ENCODE measurements at regions of chr14 and their contacts with region 1.

Region 1: GRCh38 chr14:23483236-23483854 is 13.8 kb downstream of the NGDN start:
- DNase-seq: peak; percentile 87
- ATAC-seq: peak; percentile 87
- H3K4me3 Mint-ChIP-seq: peak overlapping the region; percentile 55
- H3K27ac Mint-ChIP-seq: peak overlapping the region; percentile 97
- H3K4me1 Mint-ChIP-seq: peaks cover 65% of the 10 kb centered on the region
- H3K27me3 Mint-ChIP-seq: no peaks in the 10 kb centered on the region; the same call in 1 of the 2 replicates
- CTCF ChIP-seq: peak; percentile 72

Region 2: DNA sequence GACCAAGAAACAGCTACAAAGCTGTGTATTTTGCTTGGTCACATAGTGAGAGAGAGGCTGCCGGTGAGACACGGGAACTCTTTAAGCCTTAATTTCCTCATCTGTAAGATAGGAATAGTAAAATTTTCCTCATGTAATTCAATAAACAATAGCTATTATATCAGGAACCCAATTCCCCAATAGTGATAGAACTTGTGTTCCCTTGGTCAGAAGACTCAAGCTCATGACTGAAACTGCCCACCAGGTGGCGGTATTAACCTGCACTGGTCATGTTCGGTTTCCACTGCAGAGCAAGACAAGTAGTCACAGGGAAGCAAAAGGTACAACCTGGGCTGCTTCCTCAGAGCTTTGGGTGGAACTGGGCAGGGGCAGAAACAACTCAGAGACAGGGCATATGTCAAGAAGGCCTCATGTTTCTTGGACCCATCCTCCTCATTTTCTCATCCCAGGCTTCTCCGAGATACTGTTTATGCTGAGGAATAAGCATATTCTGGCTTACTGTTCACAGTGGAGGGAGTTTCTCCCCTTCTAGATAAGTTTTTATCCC is 496.8 kb before region 1 on chr14:
- CTCF ChIA-PET with region 1: no interaction called
- POLR2A ChIA-PET with region 1: no interaction called
- DNase-seq: peak; percentile 95
- ATAC-seq: peak; percentile 57
- H3K4me3 Mint-ChIP-seq: no peak overlapping the region
- H3K27ac Mint-ChIP-seq: no peak overlapping the region
- H3K4me1 Mint-ChIP-seq: peaks cover 5% of the 10 kb centered on the region
- H3K27me3 Mint-ChIP-seq: no peaks in the 10 kb centered on the region; the same call in 1 of the 2 replicates
- CTCF ChIP-seq: peak; percentile 83

Region 3: DNA sequence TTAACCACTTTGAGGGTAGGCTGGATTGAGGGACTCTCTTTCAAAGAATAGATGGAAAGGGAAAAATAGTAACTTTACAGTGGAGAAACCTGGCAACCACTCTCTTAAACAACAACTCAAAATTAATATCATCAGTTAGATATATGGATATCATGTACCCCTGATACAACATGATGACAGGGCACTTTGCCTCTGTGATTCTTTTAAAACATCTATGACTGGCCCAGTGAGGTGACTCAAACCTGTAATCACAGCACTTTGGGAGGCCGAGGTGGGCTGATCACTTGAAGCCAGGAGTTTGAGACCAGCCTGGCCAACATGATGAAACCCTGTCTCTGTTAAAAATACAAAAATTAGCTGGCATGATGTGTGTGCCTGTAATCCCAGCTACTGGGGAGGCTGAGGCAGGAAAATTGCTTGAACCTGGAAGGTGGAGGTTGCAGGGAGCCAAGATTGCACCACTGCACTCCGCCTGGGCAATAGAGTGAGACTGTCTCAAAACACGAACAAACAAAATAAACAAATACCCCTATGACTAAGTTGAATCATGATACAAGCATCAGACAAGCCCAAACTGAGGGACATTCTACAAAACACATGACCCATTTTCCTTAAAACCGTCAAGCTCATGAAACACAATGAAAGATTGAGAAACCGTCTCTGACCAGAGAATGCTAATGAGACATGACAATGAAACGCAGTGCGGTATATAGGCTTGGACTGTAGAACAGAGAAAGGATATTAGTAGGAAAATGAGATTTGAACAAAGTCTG is 273.5 kb before region 1 on chr14:
- CTCF ChIA-PET with region 1: no interaction called
- POLR2A ChIA-PET with region 1: no interaction called
- DNase-seq: no peak
- ATAC-seq: no peak
- H3K4me3 Mint-ChIP-seq: no peak overlapping the region
- H3K27ac Mint-ChIP-seq: no peak overlapping the region
- H3K4me1 Mint-ChIP-seq: peaks cover 32% of the 10 kb centered on the region
- H3K27me3 Mint-ChIP-seq: no peaks in the 10 kb centered on the region
- CTCF ChIP-seq: no peak

Region 4: GRCh38 chr14:23385642-23386265 is 97.6 kb before region 1 on chr14:
- CTCF ChIA-PET with region 1: no interaction called
- POLR2A ChIA-PET with region 1: no interaction called
- DNase-seq: no peak
- ATAC-seq: peak; percentile 43; the same call in 1 of the 2 replicates
- H3K4me3 Mint-ChIP-seq: no peak overlapping the region
- H3K27ac Mint-ChIP-seq: no peak overlapping the region
- H3K4me1 Mint-ChIP-seq: peaks cover 11% of the 10 kb centered on the region
- H3K27me3 Mint-ChIP-seq: peaks cover 38% of the 10 kb centered on the region
- CTCF ChIP-seq: no peak

Region 5: GRCh38 chr14:23430016-23430787 is 53.1 kb before region 1 on chr14:
- CTCF ChIA-PET with region 1: no interaction called
- POLR2A ChIA-PET with region 1: no interaction called
- DNase-seq: no peak
- ATAC-seq: no peak
- H3K4me3 Mint-ChIP-seq: no peak overlapping the region
- H3K27ac Mint-ChIP-seq: no peak overlapping the region
- H3K4me1 Mint-ChIP-seq: no peaks in the 10 kb centered on the region
- H3K27me3 Mint-ChIP-seq: peaks cover 51% of the 10 kb centered on the region
- CTCF ChIP-seq: no peak

Region 6: DNA sequence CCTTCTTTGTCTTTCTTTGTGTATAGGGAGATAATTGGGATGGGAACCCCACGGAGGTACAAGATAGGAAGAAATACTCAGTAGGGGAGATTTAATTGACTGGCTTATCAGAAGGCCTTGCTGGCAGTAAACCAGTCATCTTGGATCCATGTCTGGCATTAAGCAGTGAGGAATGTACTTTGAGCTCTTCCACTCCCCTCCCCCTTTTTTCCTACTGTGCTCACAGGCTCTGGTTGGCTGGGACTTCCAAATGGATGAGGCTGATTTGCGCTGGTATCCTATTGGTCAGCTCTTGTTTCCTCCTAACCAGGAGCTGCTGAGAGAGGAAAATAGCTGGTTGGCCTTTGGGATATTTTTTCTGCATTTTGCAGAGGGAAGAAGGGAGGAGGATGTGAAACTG is 10.9 kb after region 1 on chr14:
- CTCF ChIA-PET with region 1: interaction called, 19 read pairs
- POLR2A ChIA-PET with region 1: interaction called, 3 read pairs
- DNase-seq: peak; percentile 44
- ATAC-seq: peak; percentile 99
- H3K4me3 Mint-ChIP-seq: peak overlapping the region; percentile 37; the same call in 1 of the 2 replicates
- H3K27ac Mint-ChIP-seq: peak overlapping the region; percentile 95
- H3K4me1 Mint-ChIP-seq: peaks cover 30% of the 10 kb centered on the region
- H3K27me3 Mint-ChIP-seq: no peaks in the 10 kb centered on the region
- CTCF ChIP-seq: no peak

Region 7: DNA sequence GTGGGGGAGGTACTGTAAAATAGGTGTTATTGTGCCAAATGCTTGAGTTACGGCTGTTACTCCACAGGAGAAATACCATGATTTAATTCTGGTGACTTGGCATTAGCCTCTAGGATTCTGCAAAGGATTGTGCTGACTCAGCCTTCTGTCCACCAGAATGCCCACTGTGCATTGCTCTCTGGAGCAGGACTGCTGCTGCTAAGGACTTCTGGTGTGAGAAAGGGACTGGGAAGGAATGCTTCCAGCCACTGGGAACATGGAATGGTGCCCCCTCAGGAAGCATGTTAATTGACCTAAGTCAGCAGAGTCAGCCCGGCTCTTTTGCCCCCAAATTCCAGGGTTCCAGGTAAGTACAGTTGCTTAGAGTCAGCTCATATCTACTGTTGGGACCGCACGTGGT is 35.4 kb after region 1 on chr14:
- CTCF ChIA-PET with region 1: interaction called, 12 read pairs
- POLR2A ChIA-PET with region 1: interaction called, 7 read pairs
- DNase-seq: no peak
- ATAC-seq: peak; percentile 66
- H3K4me3 Mint-ChIP-seq: no peak overlapping the region
- H3K27ac Mint-ChIP-seq: no peak overlapping the region
- H3K4me1 Mint-ChIP-seq: peaks cover 55% of the 10 kb centered on the region
- H3K27me3 Mint-ChIP-seq: peaks cover 38% of the 10 kb centered on the region
- CTCF ChIP-seq: no peak

Region 8: DNA sequence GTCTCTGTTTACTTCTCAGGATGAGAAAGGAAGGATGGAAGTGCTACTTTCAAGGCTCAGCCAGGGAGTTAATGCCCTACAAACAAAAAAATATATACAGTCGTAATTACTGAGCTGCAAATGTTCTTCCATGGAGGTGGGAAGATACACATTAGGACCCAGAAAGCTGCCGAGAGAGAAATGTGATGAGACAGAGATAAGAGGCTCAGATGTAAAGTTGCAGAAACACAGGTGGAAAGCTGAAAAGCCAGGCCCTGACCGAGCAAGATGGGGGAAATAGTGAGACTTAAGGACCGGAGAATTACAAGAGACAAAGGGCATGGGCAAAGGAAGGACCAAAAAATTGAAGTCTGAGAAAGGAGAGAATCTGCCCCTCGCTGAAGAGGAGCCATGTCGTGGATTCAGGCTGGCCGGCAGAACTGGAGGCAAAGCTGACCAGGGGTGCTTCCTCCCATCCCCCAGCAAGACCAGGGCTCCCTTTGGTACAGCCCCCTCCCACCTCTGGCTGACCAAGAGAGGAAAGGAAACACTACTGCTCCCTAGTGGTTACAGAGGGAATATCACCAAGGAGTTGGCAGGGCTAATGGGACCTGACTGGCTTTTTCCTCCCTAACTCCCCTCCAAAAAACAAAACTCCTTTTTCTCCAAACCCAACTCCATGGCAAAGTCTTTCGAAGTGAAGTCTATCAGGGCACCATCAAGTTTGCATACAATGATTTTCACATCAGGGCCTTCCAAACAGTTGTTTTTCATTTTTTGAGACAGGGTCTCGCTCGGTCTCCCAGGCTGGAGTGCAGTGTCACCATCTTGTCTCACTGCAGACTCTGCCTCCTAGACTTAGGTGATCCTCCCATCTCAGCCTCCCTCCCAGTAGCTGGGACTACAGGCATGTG is 56.1 kb after region 1 on chr14:
- CTCF ChIA-PET with region 1: interaction called, 181 read pairs
- POLR2A ChIA-PET with region 1: interaction called, 73 read pairs
- DNase-seq: peak; percentile 77
- ATAC-seq: peak; percentile 22
- H3K4me3 Mint-ChIP-seq: peak overlapping the region; percentile 83
- H3K27ac Mint-ChIP-seq: peak overlapping the region; percentile 100
- H3K4me1 Mint-ChIP-seq: peaks cover 57% of the 10 kb centered on the region
- H3K27me3 Mint-ChIP-seq: no peaks in the 10 kb centered on the region
- CTCF ChIP-seq: peak; percentile 83

Region 9: GRCh38 chr14:23544511-23545447 is 61.4 kb after region 1 on chr14:
- CTCF ChIA-PET with region 1: interaction called, 181 read pairs
- POLR2A ChIA-PET with region 1: interaction called, 73 read pairs
- DNase-seq: peak; percentile 86
- ATAC-seq: peak; percentile 59
- H3K4me3 Mint-ChIP-seq: peak overlapping the region; percentile 57
- H3K27ac Mint-ChIP-seq: no peak overlapping the region; the same call in none of the 2 replicates
- H3K4me1 Mint-ChIP-seq: peaks cover 22% of the 10 kb centered on the region
- H3K27me3 Mint-ChIP-seq: no peaks in the 10 kb centered on the region
- CTCF ChIP-seq: no peak

Measured in WTC11 (cell line).